Head of caudate nucleus (tissue), 42 donors: ENCODE measurements at regions of chr20 and their contacts with region 1.

Region 1: GRCh38 chr20:61841966-61842365 is 223.7 kb downstream of the TAF4 start:
- DNase-seq: no peak

Region 2: GRCh38 chr20:61896058-61896961 is 54.3 kb after region 1 on chr20:
- intact Hi-C with region 1: no loop called
- DNase-seq: peak in 41 of 42 donors; percentile 16 to 84 (median 68)

Region 3: DNA sequence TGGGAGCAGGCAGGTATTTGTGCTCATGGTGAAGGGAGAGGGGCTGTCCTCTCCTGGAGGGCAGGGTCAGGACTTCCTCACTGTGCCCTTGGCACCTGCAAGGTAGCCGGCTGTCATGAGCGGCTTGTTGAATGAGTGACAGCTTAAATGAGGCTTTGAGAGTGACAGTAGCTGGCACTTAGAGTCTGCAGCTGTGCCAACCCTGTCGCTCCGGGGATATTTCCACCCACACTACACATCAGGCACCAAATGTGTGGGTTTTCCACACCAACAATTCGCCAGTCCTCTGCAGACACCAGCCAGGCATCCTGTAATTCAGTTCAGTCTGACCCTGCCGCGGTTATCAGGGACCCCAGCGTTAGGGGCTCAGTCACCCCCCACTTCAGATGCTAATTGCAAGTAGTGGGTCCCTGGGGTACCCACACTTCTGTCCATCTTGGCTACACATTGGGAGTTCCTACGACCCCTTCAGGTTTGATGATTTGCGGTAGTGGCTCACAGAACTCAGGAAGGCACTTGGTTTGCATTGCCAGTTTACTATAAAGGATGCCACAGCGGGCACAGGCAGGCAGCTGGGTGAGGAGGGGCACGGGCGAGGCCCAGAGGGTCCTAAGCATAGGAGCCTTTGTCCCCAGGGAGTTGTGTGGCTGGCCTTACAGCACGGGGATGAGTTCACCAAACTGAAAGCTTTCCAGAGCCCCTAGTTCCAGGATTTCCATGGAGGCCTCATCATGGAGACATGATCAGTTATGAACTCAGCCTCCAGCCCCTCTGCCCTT is 350.0 kb after region 1 on chr20:
- intact Hi-C with region 1: no loop called
- DNase-seq: peak in 2 of 42 donors; percentile 8 to 32

Region 4: GRCh38 chr20:62376112-62377063 is 534.4 kb after region 1 on chr20:
- intact Hi-C with region 1: loop called (anchors 10 kb)
- DNase-seq: peak in 1 of 42 donors; percentile 46